ENCODE measurements at regions of chr14 and their contacts with region 1.

Region 1: DNA sequence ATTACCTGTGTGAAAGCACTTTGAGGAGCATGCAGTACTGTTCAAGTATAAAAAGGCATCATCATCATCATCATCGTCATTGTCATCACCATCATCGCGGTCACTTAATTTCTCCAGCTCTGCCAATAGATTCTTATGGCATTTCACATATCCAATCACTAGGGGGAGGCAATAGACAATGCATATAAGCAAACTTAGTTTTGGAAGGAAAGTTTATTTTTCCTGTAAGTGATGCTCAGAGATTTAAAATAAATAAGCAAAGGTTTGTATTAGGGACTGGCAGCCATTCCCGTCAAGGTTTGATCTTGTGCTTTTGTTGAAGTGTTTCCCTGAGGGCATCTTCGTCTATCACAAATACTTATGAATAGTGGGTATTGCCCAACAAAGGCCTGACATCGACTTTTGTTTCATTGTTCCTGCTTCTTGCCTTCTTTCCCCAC is 127.4 kb downstream of the KTN1 start:
- DNase-seq: peak in 3 of 5 donors; percentile 22 to 31 (median 26)
- H3K4me3 ChIP-seq: no peak overlapping the region
- H3K4me3 Mint-ChIP-seq: no peak overlapping the region
- H3K27ac ChIP-seq: no peak overlapping the region
- H3K27ac Mint-ChIP-seq: no peak overlapping the region
- H3K4me1 ChIP-seq: no peaks in the 10 kb centered on the region
- H3K4me1 Mint-ChIP-seq: no peaks in the 10 kb centered on the region
- H3K27me3 ChIP-seq: no peaks in the 10 kb centered on the region
- H3K27me3 Mint-ChIP-seq: no peaks in the 10 kb centered on the region

Region 2: GRCh38 chr14:55889124-55889523 is 181.7 kb after region 1 on chr14:
- CTCF ChIA-PET with region 1: no interaction called
- POLR2A ChIA-PET with region 1: no interaction called
- intact Hi-C with region 1: no loop called
- DNase-seq: no peak
- H3K4me3 ChIP-seq: no peak overlapping the region
- H3K4me3 Mint-ChIP-seq: no peak overlapping the region
- H3K27ac ChIP-seq: no peak overlapping the region
- H3K27ac Mint-ChIP-seq: no peak overlapping the region
- H3K4me1 ChIP-seq: no peaks in the 10 kb centered on the region
- H3K4me1 Mint-ChIP-seq: no peaks in the 10 kb centered on the region
- H3K27me3 ChIP-seq: no peaks in the 10 kb centered on the region
- H3K27me3 Mint-ChIP-seq: peaks cover 12 to 23% of the 10 kb centered on the region in 2 donors

Region 3: DNA sequence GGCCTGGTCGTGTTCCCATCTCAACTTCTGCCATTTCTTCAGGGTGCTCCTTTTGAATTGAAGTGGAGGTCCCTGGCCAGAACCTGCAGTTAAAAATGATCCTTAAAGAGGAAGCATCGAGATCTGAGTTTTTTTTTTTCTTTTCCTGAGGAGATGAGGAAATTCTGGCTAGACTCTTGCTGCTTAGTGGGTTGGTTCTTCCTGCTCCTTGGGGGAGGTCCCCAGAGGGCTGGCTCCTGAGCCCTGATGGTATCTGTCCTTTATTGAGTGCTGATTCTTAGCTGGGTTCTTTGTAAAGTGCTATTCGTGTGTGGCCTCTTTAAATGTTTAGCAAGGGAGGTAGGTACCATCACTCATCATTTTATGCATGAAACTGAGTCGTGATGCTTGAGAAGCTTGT is 422.5 kb after region 1 on chr14:
- CTCF ChIA-PET with region 1: no interaction called
- POLR2A ChIA-PET with region 1: no interaction called
- intact Hi-C with region 1: no loop called
- DNase-seq: no peak
- H3K4me3 ChIP-seq: no peak overlapping the region
- H3K4me3 Mint-ChIP-seq: peak overlapping the region in 4 of 8 donors; percentile 14 to 32 (median 28)
- H3K27ac ChIP-seq: no peak overlapping the region
- H3K27ac Mint-ChIP-seq: no peak overlapping the region
- H3K4me1 ChIP-seq: peaks cover 16% of the 10 kb centered on the region
- H3K4me1 Mint-ChIP-seq: peaks cover 15 to 47% (median 34%) of the 10 kb centered on the region in 4 donors
- H3K27me3 ChIP-seq: no peaks in the 10 kb centered on the region
- H3K27me3 Mint-ChIP-seq: peaks cover 1 to 3% of the 10 kb centered on the region in 2 donors

Region 4: DNA sequence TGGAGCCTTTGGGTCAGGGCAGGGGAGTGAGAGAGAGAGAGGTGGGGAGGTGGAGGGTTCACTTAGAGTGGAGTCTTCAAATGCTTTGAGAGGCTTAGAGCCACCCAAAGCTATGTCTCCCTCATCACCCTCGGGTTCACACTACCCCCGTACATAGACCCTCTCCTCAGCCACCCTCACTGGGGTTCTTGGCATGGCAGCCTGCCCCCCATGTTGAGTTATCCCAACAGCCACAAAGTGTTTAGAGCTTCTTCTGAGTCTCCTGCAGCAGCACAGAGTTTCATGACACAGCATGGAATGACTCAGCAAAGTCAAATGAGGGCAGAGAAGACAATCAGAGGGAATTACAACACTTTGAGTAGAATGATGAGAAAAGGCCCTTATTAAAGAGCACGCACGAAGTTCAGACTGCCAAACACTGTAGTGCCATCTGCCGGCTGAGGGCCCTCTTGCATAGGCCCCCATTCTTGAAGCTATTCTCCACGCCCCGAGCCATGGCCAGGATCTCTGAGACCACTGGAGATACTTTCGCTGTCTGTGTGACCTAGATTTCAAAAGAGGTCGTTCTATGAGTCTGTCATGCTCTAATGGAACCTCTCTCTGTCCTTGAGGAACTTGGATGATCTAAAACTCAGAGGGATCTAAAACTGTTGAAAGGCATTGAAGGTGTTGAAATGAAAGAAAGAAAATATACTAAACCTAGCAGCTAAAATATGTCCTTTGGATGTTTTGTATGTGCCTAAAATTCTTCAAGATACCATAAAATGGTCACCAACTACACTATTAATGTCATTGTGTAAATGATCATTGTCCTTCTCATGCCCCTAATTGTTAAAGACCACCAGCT is 632.7 kb after region 1 on chr14:
- CTCF ChIA-PET with region 1: interaction called, 7 read pairs
- POLR2A ChIA-PET with region 1: no interaction called
- intact Hi-C with region 1: loop called (anchors 1 kb)
- DNase-seq: peak in 4 of 5 donors; percentile 30 to 44 (median 36)
- H3K4me3 ChIP-seq: no peak overlapping the region
- H3K4me3 Mint-ChIP-seq: no peak overlapping the region
- H3K27ac ChIP-seq: no peak overlapping the region
- H3K27ac Mint-ChIP-seq: no peak overlapping the region
- H3K4me1 ChIP-seq: no peaks in the 10 kb centered on the region
- H3K4me1 Mint-ChIP-seq: no peaks in the 10 kb centered on the region
- H3K27me3 ChIP-seq: no peaks in the 10 kb centered on the region
- H3K27me3 Mint-ChIP-seq: no peaks in the 10 kb centered on the region

Region 5: DNA sequence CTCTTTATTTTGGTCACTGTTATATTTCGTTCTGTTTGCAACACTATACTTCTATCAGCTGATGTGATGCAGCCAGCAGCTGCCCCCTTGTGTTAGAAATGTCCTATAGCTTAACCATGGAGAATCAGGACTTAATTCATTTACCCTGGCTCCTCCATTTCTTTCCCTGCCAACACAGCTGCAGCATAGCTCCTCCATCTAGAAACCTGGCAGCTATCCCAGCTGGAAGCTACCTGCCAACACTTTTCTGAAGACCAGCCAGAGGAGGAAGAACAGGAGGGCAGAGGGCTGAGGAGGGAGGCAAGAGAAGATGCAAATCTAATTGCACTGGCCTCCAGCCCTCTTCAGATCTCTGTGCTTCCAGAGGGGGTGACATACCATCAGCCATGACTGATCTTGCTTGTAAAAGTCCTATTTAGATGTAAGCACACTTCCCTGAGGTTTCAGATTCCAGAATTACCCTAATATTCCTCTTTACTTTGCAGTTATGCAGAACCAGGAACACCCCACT is 715.4 kb after region 1 on chr14:
- CTCF ChIA-PET with region 1: interaction called, 3 read pairs
- POLR2A ChIA-PET with region 1: no interaction called
- intact Hi-C with region 1: loop called (anchors 1 kb)
- DNase-seq: peak in 4 of 5 donors; percentile 17 to 35 (median 24)
- H3K4me3 ChIP-seq: no peak overlapping the region
- H3K4me3 Mint-ChIP-seq: no peak overlapping the region
- H3K27ac ChIP-seq: no peak overlapping the region
- H3K27ac Mint-ChIP-seq: no peak overlapping the region
- H3K4me1 ChIP-seq: no peaks in the 10 kb centered on the region
- H3K4me1 Mint-ChIP-seq: peaks cover 0 to 4% (median 0%) of the 10 kb centered on the region in 4 donors
- H3K27me3 ChIP-seq: no peaks in the 10 kb centered on the region
- H3K27me3 Mint-ChIP-seq: peaks cover 0 to 2% of the 10 kb centered on the region in 2 donors

Measured in CD4-positive, alpha-beta memory T cell (primary cell).